Mammary epithelial cell (primary cell): ENCODE measurements at regions of chr13 and their contacts with region 1.

Region 1: GRCh38 chr13:49759503-49759902 is 33.0 kb downstream of the KPNA3 start:
- DNase-seq: no peak
- H3K4me3 ChIP-seq: no peak overlapping the region
- H3K27ac ChIP-seq: no peak overlapping the region
- H3K4me1 ChIP-seq: no peaks in the 10 kb centered on the region
- H3K27me3 ChIP-seq: no peaks in the 10 kb centered on the region
- CTCF ChIP-seq: no peak

Region 2: GRCh38 chr13:49779721-49780120 is 20.2 kb after region 1 on chr13:
- CTCF ChIA-PET with region 1: interaction called, 11 read pairs
- dilution Hi-C with region 1: no loop called
- in situ Hi-C with region 1: no loop called
- intact Hi-C with region 1: no loop called
- DNase-seq: no peak
- H3K4me3 ChIP-seq: no peak overlapping the region
- H3K27ac ChIP-seq: no peak overlapping the region
- H3K4me1 ChIP-seq: no peaks in the 10 kb centered on the region
- H3K27me3 ChIP-seq: no peaks in the 10 kb centered on the region
- CTCF ChIP-seq: no peak

Region 3: GRCh38 chr13:49810567-49811526 is 51.3 kb after region 1 on chr13:
- CTCF ChIA-PET with region 1: no interaction called
- dilution Hi-C with region 1: loop called (anchors 5 kb)
- in situ Hi-C with region 1: no loop called
- intact Hi-C with region 1: no loop called
- DNase-seq: peak; percentile 49
- H3K4me3 ChIP-seq: no peak overlapping the region
- H3K27ac ChIP-seq: no peak overlapping the region
- H3K4me1 ChIP-seq: no peaks in the 10 kb centered on the region
- H3K27me3 ChIP-seq: no peaks in the 10 kb centered on the region
- CTCF ChIP-seq: no peak